Posterior vena cava (tissue), 2 donors: ENCODE measurements at regions of chr19 and their contacts with region 1.

Region 1: GRCh38 chr19:57099199-57099661 is 20.6 kb upstream of the USP29 start:
- DNase-seq: peak; percentile 88

Region 2: DNA sequence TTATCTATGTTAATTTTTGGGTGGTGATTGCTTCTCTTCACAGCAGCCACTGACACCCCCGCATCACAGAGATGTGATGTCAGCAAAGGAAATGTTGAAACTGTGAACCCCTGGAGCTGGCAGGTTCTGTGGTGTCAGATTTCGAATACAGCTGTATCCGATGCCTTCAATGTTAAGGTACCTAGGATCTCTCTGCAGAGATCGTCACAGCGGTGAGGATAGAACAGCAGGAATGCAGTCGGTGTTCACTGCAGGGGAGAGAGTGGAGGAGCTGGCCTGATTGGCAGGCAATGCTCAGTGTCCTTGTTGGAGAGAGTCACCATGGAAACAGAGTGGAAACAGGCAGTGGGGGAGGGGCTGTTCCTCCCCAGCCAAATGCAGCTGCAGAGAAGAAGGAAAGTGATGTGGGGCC is 348.1 kb before region 1 on chr19:
- intact Hi-C with region 1: loop called in 1 of 2 experiments (anchors 10 kb)
- DNase-seq: no peak

Region 3: GRCh38 chr19:56839652-56840459 is 259.4 kb before region 1 on chr19:
- intact Hi-C with region 1: no loop called
- DNase-seq: peak; percentile 96

Region 4: DNA sequence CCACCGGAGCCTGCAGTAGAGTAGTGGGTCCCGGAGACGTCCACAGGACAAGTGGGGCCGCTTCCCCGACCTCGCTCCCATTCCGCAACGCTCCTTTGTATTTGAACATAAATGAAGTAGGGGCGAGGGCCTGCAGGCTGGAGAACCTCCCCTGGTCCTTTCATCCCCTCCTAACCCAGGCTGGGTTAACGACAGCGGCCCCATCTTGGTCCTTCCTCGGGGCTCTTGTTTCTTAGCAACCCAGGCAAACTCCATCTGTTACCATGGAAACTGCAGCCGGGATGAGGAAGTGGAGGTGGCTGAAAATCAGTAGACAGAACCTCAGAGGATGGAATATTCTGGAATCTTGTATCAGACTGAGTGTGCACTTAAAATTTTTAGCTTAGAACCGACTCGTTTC is 112.0 kb before region 1 on chr19:
- intact Hi-C with region 1: no loop called
- DNase-seq: peak; percentile 59

Region 5: DNA sequence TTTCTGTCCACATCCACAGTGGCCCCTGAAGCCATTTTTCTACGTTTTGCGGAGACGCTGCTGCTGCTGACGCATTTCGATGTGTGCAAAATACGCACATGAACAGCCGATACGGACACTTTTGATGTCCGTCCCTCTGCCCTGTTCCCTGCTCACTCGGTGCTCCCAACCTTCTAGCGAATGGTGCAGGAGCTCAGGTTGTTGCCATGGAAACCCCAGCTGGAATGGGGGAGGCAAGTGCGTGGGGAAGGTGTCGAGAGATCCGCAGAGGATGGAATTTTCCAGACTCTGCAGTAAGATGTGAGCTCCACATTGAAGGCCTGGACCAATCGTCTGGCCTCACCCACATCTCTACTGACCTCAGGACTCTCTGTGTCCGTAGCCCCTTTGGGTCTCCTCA is 88.7 kb before region 1 on chr19:
- intact Hi-C with region 1: no loop called
- DNase-seq: no peak